ENCODE measurements at regions of chr14 and their contacts with region 1.

Region 1: DNA sequence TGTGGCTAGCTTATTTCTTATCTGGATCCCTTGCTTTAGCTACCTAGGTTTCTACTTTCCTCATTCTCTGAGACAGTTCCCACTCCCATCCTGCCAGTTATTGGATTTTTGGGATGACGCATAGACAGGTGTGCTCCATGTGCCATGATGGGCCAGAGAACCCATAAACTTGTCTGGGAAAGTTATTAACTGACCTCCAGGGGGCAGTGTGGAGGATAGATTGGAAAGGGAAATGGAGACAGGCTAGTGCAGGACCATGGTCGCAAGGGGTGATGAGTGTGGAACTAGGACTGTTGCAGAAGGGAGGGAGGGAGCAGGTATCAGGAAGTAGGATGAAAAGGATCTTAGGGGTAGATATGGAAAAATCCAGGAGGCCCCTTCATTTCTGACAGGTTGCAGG is 80.3 kb downstream of the ESRRB start:
- DNase-seq: no peak
- ATAC-seq: peak; percentile 72 to 86 (median 76)
- H3K4me3 ChIP-seq: no peak overlapping the region
- H3K27ac ChIP-seq: no peak overlapping the region
- H3K4me1 ChIP-seq: no peaks in the 10 kb centered on the region
- H3K27me3 ChIP-seq: no peaks in the 10 kb centered on the region
- CTCF ChIP-seq: peak; percentile 56

Region 2: DNA sequence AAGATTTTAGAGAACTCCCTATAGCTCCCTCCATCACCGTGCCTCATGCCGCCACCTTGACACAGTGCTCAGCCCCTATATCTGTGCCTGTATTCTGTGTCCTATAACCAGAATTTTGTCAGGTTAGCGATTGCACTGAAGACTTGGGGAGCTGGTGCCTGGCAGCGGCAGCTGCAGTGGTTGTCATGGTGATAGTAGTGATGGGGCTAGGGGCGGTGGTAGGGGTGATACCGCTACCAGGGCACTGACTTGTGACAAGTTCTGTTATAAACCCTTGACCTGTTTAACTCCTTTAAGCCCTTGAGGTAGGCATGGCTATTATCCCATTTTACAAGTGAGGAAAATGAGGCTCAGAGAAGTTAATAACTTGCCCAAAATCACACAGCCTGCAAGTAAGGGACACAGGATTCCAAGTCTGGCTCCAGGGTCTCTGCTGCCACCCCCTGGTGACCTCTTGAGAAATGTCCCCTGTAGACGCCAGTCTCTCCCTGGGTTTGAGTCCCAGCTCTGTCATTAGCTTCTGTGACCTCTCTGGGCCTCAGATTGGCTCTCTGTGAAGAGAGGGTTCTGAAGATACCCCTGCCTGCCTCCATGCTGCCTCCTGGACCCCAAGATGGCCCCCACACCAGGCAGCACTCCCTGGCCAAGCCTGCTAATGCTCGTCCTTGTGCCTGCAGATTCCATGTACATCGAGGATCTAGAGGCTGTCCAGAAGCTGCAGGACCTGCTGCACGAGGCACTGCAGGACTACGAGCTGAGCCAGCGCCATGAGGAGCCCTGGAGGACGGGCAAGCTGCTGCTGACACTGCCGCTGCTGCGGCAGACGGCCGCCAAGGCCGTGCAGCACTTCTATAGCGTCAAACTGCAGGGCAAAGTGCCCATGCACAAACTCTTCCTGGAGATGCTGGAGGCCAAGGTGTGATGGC is 41.6 kb after region 1 on chr14:
- intact Hi-C with region 1: loop called (anchors 5 kb)
- DNase-seq: no peak
- ATAC-seq: peak in 2 of 4 donors; percentile 53 to 62
- H3K4me3 ChIP-seq: no peak overlapping the region
- H3K27ac ChIP-seq: no peak overlapping the region
- H3K4me1 ChIP-seq: no peaks in the 10 kb centered on the region
- H3K27me3 ChIP-seq: no peaks in the 10 kb centered on the region
- CTCF ChIP-seq: no peak

Region 3: GRCh38 chr14:76546426-76547221 is 90.4 kb after region 1 on chr14:
- intact Hi-C with region 1: loop called in 1 of 2 experiments (anchors 10 kb)
- DNase-seq: no peak
- ATAC-seq: peak in 2 of 4 donors; percentile 27 to 47
- H3K4me3 ChIP-seq: no peak overlapping the region
- H3K27ac ChIP-seq: no peak overlapping the region
- H3K4me1 ChIP-seq: no peaks in the 10 kb centered on the region
- H3K27me3 ChIP-seq: peaks cover 0 to 3% (median 2%) of the 10 kb centered on the region in 3 donors
- CTCF ChIP-seq: peak; percentile 40

Region 4: DNA sequence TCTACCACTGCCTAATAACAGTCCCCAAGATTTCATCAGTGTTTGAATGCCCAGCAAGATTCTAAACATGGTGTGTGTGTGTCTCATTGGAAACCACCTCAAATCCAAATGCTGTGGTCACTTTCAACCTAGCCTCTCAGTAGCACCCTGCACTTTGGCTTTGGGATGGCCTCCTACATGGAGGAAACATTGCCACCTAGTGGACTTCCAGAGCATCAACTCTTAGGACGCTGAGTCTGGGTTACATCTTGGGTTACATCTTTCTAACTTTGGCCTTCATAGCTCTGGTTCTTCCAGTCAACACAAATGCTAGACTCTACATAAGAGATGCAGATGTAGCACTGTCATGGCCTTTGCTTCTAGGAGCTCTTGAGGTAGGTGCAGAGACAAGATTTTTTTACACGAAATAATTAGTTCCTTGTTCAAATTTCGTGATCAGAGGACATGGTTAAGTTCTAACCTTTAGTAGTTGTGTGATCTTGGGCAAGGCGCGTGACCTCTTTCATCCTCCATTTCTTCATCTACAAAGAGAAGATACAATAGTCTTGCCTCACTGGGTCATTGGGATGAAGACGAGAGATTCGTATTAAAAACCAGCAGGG is 191.6 kb after region 1 on chr14:
- intact Hi-C with region 1: loop called (anchors 2 kb)
- DNase-seq: no peak
- ATAC-seq: peak; percentile 73 to 81 (median 76)
- H3K4me3 ChIP-seq: no peak overlapping the region
- H3K27ac ChIP-seq: no peak overlapping the region
- H3K4me1 ChIP-seq: no peaks in the 10 kb centered on the region
- H3K27me3 ChIP-seq: peaks cover 0 to 2% (median 0%) of the 10 kb centered on the region in 3 donors
- CTCF ChIP-seq: peak; percentile 82